ENCODE measurements at regions of chr19 and their contacts with region 1.

Region 1: GRCh38 chr19:17470068-17470841 is at the start of gene SLC27A1:
- DNase-seq: peak; percentile 98 to 99
- H3K4me3 ChIP-seq: peak within 1 kb of the TSS; percentile 88
- H3K27ac ChIP-seq: peak within 1 kb of the TSS; percentile 71
- H3K4me1 ChIP-seq: peaks cover 31% of the 10 kb centered on the region
- H3K27me3 ChIP-seq: no peaks in the 10 kb centered on the region
- CTCF ChIP-seq: no peak
- total RNA-seq, gene SLC27A1: 30.8 and 40.2 TPM in 2 replicates

Region 2: DNA sequence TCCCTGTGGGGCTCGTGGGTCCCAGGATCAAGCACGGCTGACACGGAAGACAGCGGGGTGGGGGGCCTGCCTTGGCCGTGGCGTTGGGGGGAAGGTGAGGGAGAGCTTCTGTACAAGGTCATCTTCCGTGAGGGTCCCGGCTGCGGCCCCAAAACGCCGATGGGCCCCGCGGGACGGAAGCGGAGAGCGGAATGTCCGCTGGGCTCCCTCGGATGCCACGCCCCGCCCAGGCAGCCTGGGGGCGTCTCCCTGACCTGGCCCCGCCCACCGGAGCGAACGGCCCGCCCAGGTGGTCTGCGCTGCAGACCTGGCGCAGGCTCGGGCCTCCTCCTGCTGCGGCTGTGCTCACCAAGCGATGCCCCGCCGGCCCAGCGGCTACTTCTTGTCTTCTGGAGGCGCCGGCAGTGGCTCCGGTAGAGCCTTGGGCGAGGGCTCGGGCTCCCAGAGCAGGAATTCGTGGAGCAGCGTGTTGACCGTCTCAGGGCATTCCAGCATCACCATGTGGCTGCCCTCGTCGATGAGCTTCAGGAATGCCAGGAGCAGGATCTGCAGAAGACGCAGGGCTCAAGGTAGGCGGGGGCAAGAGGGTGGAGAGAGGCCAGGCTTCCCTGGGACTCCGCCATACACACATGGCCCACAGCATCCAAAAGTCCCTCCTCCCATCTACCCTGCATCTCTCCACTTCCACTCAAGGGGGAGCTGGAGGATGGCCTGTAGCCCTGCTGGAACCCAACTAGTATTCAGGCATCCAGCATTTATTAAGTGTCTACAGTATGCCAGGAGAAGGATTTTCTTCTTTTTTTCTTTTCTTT is 177.8 kb before region 1 on chr19:
- CTCF ChIA-PET with region 1: no interaction called
- POLR2A ChIA-PET with region 1: no interaction called
- intact Hi-C with region 1: loop called (anchors 1 kb)
- DNase-seq: peak; percentile 86 to 89
- H3K4me3 ChIP-seq: peak overlapping the region; percentile 65
- H3K27ac ChIP-seq: peak overlapping the region; percentile 63
- H3K4me1 ChIP-seq: peaks cover 35% of the 10 kb centered on the region
- H3K27me3 ChIP-seq: no peaks in the 10 kb centered on the region
- CTCF ChIP-seq: peak; percentile 77

Region 3: DNA sequence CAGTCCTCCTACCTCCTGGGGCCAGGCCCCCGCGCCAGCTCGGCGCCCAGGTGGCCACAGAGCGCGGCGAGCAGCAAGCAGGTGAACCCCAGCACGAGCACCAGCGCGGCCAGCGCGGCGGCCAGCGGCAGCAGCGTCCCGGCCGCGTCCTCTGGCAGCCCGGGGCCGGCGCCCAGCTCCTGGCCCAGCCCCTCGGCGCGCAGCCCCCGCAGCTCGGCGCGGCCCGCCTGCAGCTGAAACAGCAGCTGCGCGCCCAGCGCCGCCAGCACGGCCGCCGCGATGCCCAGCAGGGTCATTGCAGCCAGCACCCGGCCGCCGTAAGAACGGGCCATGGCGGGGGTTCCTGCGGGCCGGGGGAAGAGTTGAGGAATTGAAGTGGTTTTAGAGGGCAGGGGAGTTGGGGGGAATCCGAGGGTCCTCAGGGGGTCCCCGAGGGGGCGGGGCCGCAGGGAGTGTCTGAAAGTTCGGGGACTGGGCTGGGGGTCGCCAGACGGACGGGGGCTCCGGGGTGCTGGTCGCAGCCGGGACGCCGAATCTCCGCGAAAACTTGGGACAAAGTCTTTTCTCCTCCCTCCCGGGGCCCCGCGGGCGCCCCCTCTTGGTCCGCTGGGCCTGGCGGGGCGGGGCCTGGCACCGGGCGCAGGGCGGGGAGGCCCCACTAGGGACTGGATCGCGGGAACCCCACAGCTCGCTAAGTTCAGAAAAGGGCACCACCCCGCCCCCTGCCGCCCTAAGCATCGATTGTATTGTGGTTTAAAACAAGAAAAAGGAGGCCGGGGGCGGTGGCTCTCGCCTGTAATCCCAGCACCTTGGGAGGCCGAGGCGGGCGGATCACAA is 21.9 kb before region 1 on chr19 and contains the start of gene TMEM221:
- CTCF ChIA-PET with region 1: interaction called, 3 read pairs
- POLR2A ChIA-PET with region 1: no interaction called
- intact Hi-C with region 1: loop called (anchors 1 kb)
- DNase-seq: peak in 1 of 2 experiments; percentile 51
- H3K4me3 ChIP-seq: peak within 1 kb of the TSS; percentile 76
- H3K27ac ChIP-seq: no peak within 1 kb of the TSS
- H3K4me1 ChIP-seq: peaks cover 14% of the 10 kb centered on the region
- H3K27me3 ChIP-seq: no peaks in the 10 kb centered on the region
- CTCF ChIP-seq: peak; percentile 71
- total RNA-seq, gene TMEM221: 2.0 and 3.9 TPM in 2 replicates

Region 4: DNA sequence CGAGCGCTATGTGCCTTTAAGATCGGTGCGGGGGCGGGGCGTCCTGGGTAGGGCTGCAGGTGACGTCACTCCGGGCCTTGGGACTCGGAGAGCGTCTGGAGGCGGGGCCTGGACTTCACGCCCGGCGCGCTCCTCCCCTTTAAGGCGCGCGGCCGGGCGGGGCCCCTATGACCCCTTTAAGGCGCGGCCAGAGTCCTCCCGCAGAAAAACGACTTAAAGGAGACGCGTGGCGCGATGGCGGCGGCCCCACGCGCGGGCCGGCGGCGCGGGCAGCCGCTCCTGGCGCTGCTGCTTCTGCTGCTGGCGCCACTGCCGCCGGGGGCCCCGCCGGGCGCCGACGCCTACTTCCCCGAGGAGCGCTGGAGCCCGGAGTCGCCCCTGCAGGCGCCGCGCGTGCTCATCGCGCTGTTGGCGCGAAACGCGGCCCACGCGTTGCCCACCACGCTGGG is 85.2 kb after region 1 on chr19 and contains the start of gene COLGALT1:
- CTCF ChIA-PET with region 1: no interaction called
- POLR2A ChIA-PET with region 1: no interaction called
- intact Hi-C with region 1: loop called (anchors 10 kb)
- DNase-seq: peak; percentile 92 to 95
- H3K4me3 ChIP-seq: peak within 1 kb of the TSS; percentile 95
- H3K27ac ChIP-seq: 0 out of 2 replicates have a peak within 1 kb of the TSS, but pooled peaks have one; percentile 0
- H3K4me1 ChIP-seq: peaks cover 7% of the 10 kb centered on the region
- H3K27me3 ChIP-seq: no peaks in the 10 kb centered on the region
- CTCF ChIP-seq: no peak
- total RNA-seq, gene COLGALT1: 82.9 and 88.8 TPM in 2 replicates

Region 5: GRCh38 chr19:17775245-17775916 is 305.1 kb after region 1 on chr19:
- CTCF ChIA-PET with region 1: interaction called, 5 read pairs
- POLR2A ChIA-PET with region 1: no interaction called
- intact Hi-C with region 1: loop called (anchors 5 kb)
- DNase-seq: peak; percentile 57 to 70
- H3K4me3 ChIP-seq: no peak overlapping the region
- H3K27ac ChIP-seq: no peak overlapping the region
- H3K4me1 ChIP-seq: peaks cover 18% of the 10 kb centered on the region
- H3K27me3 ChIP-seq: no peaks in the 10 kb centered on the region
- CTCF ChIP-seq: peak; percentile 93